HEK293T (cell line): ENCODE measurements at regions of chr4 and their contacts with region 1.

Region 1: DNA sequence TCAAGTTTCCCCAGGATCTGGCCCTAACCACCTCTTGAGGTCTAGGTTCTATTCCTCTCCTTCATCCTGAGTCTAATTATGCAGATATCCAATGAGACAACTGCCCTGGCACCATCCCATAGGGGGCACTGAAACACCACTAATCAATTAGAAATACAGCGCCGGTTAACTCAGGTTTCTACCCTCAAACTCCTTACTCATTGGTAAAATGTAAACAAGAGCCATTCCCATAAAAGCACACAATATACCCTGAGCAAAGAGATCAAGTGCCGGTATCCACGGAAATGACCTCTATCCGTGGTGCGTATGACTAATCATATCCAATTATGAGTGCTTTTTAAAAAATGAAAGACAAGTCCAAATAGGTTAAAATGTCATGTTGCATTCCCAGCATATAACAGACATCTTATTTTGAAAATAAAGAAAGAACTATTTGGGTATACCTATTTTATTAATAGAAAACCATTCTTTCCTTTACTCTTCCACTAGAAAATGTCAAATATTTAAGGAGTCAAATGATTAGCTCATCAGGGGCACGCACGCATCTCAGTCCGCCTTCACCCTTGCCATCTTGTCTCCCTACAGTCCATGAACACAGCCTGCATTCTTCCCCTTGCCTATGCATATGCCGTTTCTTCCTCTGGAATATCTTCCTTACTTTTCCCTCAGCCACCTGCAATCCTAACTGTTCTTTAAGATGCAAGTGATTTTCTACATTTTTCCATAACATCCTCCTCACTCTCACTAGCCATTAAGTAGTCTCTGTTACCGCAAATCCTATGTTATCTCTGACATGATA is 141.1 kb downstream of the MAML3 start:
- DNase-seq: peak; percentile 50

Region 2: DNA sequence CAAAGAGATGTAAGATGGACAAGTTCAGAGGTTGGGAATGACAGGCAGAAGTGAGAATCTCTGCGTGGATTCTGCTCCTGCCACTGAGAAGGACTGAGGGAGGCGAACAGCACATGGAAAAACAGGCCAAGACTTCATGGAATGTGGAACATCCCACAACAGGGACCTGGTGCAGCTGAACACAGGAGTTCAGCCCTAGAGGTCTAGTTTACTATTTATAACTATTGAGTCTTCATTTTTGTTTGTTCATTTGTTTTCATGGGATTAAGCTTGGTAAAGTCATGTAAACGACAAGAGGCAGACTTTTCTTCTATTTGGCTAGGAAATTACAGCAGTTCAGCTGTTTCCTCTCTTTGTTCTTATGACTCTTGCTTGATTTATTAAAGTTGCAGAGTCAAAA is 93.4 kb before region 1 on chr4:
- CTCF ChIA-PET with region 1: no interaction called
- POLR2A ChIA-PET with region 1: no interaction called
- DNase-seq: no peak

Region 3: DNA sequence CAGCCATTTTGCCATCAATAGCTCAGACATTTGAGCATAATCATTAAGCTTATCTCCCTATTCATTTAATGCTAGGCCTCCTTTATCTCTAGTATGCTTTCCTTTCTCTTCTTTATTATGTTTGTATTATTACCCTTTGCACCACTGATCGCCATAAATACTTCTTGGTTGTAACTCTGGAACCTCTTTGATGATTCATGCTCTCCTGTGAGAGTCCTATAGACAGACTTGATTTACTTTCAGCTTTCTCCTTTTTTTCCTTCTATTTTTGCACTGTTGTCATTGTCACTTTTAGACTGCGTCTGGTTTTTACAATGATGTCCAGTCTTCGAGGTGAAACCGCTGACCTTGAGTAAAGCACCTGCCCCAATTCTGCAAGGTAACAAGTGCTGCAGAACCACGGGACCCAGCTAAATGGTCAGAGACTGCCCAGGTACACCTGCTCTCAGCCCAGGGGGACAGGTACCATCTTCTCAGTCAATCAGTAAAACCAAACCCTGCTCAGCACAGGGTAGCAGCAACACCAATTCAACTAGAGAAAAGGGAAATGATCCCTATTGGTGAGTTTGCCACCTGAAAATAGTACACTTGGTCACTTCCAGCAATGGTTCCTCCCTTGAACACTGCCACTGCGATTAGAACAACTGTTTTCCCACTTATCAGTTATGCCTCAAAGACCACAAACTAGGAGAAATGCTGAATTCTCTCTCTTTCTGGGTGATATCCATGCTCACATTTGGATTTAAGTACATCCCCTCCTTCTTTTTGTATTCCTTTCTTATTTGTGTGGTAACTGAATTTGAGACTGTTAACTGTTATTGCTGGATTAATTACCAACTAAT is 16.0 kb after region 1 on chr4:
- CTCF ChIA-PET with region 1: interaction called, 14 read pairs
- POLR2A ChIA-PET with region 1: no interaction called
- DNase-seq: no peak

Region 4: DNA sequence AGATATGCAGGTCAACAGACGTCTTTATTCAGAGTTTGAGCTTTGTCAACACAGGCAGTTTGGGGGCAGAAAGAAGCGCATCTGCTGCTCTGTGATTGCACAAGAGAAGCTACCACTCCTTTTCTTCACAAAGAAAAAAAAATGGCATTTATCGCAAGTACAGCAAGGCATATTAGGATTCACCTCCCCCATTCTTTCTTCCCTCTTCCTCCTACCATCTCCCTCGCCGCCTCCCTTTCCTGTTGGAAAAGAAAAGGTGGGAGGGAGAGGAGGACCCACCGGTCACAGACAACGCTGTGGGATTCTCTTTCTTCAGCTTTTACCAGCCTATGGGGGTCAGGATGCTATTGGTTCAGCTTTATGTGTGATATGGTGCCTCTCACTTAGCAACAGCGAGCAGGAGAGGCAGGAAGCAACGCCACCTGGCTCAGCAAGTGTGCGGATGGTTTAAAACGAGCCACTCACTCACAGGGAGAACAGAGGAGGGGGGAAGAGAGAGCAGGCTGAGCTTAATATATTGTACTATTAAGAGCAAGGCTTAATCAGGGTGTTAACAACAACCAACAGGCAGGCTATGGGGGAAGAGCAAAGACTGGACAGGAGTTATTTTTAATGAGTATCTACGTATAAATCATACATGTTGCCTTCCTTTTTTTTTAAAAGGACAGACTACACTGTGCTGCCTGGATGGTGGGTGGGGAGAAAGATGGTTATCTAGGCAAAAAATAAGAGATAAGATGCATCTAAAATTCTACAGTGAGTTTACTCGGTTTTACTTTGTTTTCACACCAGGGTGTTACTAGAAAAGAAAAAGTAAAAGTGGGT is 36.3 kb after region 1 on chr4:
- CTCF ChIA-PET with region 1: interaction called, 10 read pairs
- POLR2A ChIA-PET with region 1: no interaction called
- DNase-seq: peak; percentile 28

Region 5: GRCh38 chr4:140252742-140253555 is 240.1 kb after region 1 on chr4:
- CTCF ChIA-PET with region 1: interaction called, 13 read pairs
- POLR2A ChIA-PET with region 1: interaction called, 11 read pairs
- DNase-seq: peak; percentile 91

Region 6: GRCh38 chr4:140330311-140330900 is 317.5 kb after region 1 on chr4:
- CTCF ChIA-PET with region 1: interaction called, 14 read pairs
- POLR2A ChIA-PET with region 1: no interaction called
- DNase-seq: peak; percentile 26

Region 7: DNA sequence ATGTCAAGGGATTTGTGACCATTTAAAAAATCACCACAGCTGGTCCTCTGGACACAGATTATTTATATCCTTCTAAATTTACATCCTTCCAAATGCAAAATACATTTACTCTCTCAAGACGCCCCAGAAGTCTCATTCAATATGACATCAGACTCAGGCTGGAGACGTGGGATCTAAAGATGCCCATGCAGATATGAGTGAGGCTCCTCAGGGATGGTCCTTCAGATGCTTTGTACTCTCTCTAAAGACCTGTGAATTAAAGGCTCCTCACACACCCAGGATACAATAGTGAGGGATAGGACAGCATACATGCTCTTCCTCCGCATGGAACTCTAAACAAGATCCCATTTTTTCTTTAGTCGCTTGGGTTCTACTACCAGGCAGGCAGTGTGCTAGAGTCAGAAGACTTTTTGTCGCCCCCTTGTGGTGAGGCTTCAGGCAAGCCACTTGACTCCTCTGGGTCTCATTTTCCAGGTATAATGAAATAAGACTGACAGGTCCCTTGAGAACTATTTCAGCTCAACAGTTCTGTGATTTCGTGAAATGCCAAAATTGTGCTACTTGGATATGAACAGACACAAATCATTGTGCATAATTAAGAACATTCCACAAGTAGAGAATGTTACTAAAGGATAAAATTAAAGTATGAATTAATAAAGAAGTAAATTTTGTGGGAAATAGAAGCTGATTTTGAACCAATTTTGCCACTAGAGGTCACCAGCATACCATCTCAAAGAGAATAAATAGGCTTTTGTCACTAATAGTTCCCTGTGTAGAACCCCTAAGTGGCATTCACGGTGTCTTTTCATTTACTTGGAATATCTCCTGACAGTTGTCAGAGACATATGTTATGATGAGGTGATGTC is 346.9 kb after region 1 on chr4:
- CTCF ChIA-PET with region 1: interaction called, 13 read pairs
- POLR2A ChIA-PET with region 1: no interaction called
- DNase-seq: peak; percentile 72

Region 8: DNA sequence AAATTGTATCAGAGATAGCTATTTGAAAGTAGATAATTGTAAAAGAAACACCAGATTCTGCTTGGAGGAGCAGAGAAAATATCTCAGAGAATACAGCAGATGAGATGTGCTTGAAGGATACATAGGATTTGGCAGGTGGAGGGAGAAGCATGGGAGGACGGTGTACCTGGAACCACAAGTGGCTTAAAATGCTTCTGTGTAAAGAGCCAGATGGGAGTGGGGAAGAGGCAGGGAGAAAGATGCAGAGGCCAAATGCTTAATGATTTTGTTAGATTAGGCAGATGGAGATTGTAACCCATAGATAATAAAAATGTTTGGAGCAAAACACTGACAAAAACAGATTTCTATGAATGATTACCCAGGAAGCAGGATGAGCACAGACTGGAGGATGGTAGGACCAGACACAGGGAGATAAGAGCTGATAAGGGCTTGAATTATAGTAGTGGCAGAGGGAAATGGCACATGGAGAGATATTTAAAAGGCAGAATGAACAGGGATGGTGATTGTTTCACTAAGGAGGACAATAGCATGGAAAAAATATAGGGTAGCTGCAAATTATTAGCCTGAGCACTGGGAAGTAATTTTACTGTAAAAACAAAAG is 888.9 kb after region 1 on chr4:
- CTCF ChIA-PET with region 1: interaction called, 12 read pairs
- POLR2A ChIA-PET with region 1: no interaction called
- DNase-seq: no peak